ENCODE measurements at regions of chr17 and their contacts with region 1.

Region 1: DNA sequence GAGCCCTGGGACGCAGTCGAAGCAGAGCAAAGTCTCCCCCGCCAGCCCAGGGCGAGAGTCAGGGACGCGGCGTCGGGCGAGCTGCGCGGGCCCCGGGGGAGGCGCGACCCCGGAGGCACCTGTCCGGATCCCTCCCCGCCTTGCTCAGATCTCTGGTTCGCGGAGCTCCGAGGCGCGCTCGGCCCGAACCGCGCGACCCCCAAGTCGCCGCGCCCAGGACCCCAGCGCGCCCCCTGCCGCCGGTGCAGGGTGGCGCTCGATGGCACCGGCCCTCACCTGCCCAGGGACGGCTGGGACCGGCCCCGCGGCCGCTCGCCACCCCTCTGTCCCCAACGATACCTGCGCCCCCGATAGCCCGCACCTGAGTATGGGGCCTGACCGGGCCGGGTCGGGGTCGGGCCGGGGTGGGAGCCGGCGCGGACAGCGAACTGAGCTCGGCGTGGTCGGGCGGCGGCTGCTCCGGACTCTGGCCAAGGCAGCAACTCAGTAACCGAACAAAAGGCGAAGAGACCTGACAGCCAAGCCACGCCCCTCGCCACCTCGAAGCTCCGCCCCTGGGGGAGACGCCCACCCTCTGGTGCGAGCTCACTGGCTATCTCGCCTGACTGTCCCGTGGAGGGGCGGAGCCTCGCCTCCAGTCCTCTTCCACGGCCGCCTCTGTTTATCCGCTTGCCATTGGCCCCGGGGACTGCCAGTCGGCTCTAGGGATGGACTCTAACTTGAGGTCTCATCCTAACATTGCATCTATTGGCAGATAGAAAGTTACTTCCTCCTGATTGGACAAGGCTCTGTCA is at the start of gene JUP:
- DNase-seq: peak; percentile 100
- H3K4me3 ChIP-seq: peak within 1 kb of the TSS; percentile 82
- H3K4me3 Mint-ChIP-seq: peak within 1 kb of the TSS; percentile 74
- H3K27ac Mint-ChIP-seq: peak within 1 kb of the TSS; percentile 93
- H3K4me1 ChIP-seq: peaks cover 23% of the 10 kb centered on the region
- H3K4me1 Mint-ChIP-seq: peaks cover 35% of the 10 kb centered on the region
- H3K27me3 ChIP-seq: no peaks in the 10 kb centered on the region
- H3K27me3 Mint-ChIP-seq: no peaks in the 10 kb centered on the region
- CTCF ChIP-seq: peak; percentile 40 to 91
- total RNA-seq, gene JUP: 392 and 419 TPM in 2 replicates

Region 2: GRCh38 chr17:41738077-41738735 is 48.2 kb before region 1 on chr17:
- CTCF ChIA-PET with region 1: interaction called, 14 read pairs
- POLR2A ChIA-PET with region 1: interaction called, 7 read pairs
- intact Hi-C with region 1: loop called (anchors 1 kb)
- DNase-seq: peak; percentile 88 to 91
- H3K4me3 ChIP-seq: no peak overlapping the region
- H3K4me3 Mint-ChIP-seq: no peak overlapping the region
- H3K27ac Mint-ChIP-seq: peak overlapping the region; percentile 51
- H3K4me1 ChIP-seq: peaks cover 31% of the 10 kb centered on the region
- H3K4me1 Mint-ChIP-seq: peaks cover 31% of the 10 kb centered on the region
- H3K27me3 ChIP-seq: no peaks in the 10 kb centered on the region; the same call in 1 of the 2 replicates
- H3K27me3 Mint-ChIP-seq: peaks cover 15% of the 10 kb centered on the region
- CTCF ChIP-seq: peak; percentile 98

Region 3: DNA sequence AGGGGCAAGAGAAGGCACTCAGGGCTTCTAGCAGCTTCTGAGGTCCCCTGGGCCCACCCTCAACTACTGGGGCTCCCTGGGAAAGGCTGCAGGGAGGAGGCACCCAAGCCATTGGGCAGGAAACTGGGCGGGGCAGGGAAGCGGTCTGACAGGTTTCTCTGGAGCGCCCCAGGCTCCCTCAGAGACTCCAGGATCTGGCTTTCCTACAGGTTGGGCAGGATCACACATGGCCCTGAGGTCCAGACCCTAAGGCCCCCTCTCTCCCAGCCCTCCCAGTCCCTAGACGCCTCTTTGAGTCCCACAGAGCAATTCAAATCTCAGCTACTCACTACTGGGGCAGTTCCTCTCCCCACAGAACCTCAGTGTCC is 14.2 kb before region 1 on chr17:
- CTCF ChIA-PET with region 1: interaction called, 14 read pairs
- POLR2A ChIA-PET with region 1: interaction called, 24 read pairs
- intact Hi-C with region 1: loop called (anchors 1 kb)
- DNase-seq: peak; percentile 90 to 92
- H3K4me3 ChIP-seq: peak overlapping the region; percentile 20
- H3K4me3 Mint-ChIP-seq: peak overlapping the region; percentile 64
- H3K27ac Mint-ChIP-seq: peak overlapping the region; percentile 92
- H3K4me1 ChIP-seq: peaks cover 58% of the 10 kb centered on the region
- H3K4me1 Mint-ChIP-seq: peaks cover 41% of the 10 kb centered on the region
- H3K27me3 ChIP-seq: no peaks in the 10 kb centered on the region
- H3K27me3 Mint-ChIP-seq: no peaks in the 10 kb centered on the region
- CTCF ChIP-seq: no peak

Region 4: GRCh38 chr17:41811549-41812380 is 25.3 kb after region 1 on chr17 and contains the start of gene P3H4:
- CTCF ChIA-PET with region 1: interaction called, 44 read pairs
- POLR2A ChIA-PET with region 1: interaction called, 44 read pairs
- intact Hi-C with region 1: loop called (anchors 1 kb)
- DNase-seq: peak; percentile 82 to 90
- H3K4me3 ChIP-seq: peak within 1 kb of the TSS; percentile 91
- H3K4me3 Mint-ChIP-seq: peak within 1 kb of the TSS; percentile 99
- H3K27ac Mint-ChIP-seq: peak within 1 kb of the TSS; percentile 97
- H3K4me1 ChIP-seq: peaks cover 21% of the 10 kb centered on the region
- H3K4me1 Mint-ChIP-seq: peaks cover 6% of the 10 kb centered on the region
- H3K27me3 ChIP-seq: no peaks in the 10 kb centered on the region
- H3K27me3 Mint-ChIP-seq: no peaks in the 10 kb centered on the region
- CTCF ChIP-seq: peak; percentile 53 to 83
- total RNA-seq, gene P3H4: 34.1 and 39.2 TPM in 2 replicates

Region 5: GRCh38 chr17:41849251-41849990 is 63.0 kb after region 1 on chr17:
- CTCF ChIA-PET with region 1: no interaction called
- POLR2A ChIA-PET with region 1: no interaction called
- intact Hi-C with region 1: no loop called
- DNase-seq: no peak
- H3K4me3 ChIP-seq: no peak overlapping the region
- H3K4me3 Mint-ChIP-seq: no peak overlapping the region
- H3K27ac Mint-ChIP-seq: no peak overlapping the region
- H3K4me1 ChIP-seq: no peaks in the 10 kb centered on the region
- H3K4me1 Mint-ChIP-seq: no peaks in the 10 kb centered on the region
- H3K27me3 ChIP-seq: no peaks in the 10 kb centered on the region
- H3K27me3 Mint-ChIP-seq: no peaks in the 10 kb centered on the region
- CTCF ChIP-seq: no peak

Region 6: DNA sequence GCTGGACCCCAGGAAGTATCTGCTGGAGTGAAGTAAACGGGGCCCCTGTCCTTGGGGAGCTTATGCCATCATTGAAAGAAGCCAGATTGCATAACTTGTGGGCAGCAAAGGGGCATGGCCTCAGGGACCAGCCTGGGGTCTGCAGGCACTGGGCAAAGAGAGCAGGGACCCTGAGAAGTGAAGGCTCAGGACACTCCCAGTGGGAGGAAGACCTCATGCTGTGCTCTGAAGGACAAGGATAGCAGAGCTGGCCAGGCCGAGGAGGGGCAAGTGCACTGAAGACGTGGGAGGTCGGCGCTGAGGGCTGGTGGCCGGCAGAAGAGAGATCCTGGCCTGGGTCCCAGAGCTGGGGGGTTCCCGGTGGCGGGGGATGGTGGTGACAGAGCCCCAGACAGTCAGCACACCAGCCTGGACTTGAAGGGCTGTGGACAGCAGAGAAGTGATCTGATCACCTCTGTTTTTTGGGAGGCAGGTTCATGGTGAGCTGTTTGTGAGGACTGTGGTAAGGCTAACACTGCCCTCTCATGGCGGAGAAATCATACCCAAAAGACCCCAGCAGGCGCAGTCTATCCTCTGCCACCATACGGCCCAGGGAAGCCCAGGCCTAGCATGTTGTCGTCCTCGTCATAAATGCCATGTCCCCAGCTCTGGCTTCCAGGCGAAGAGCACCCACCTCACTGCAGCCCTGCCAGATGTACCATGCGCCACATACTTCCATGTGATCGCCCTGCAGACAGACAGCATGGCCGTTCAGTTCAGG is 173.1 kb after region 1 on chr17:
- CTCF ChIA-PET with region 1: interaction called, 10 read pairs
- POLR2A ChIA-PET with region 1: no interaction called
- intact Hi-C with region 1: no loop called
- DNase-seq: peak; percentile 68 to 69
- H3K4me3 ChIP-seq: no peak overlapping the region
- H3K4me3 Mint-ChIP-seq: no peak overlapping the region
- H3K27ac Mint-ChIP-seq: peak overlapping the region; percentile 37
- H3K4me1 ChIP-seq: peaks cover 20% of the 10 kb centered on the region
- H3K4me1 Mint-ChIP-seq: peaks cover 16% of the 10 kb centered on the region
- H3K27me3 ChIP-seq: no peaks in the 10 kb centered on the region
- H3K27me3 Mint-ChIP-seq: no peaks in the 10 kb centered on the region
- CTCF ChIP-seq: peak; percentile 60 to 62